Adrenal gland (tissue), 19 donors: ENCODE measurements at regions of chr12 and their contacts with region 1.

Region 1: GRCh38 chr12:40107098-40107802 is 1.4 kb upstream of the SLC2A13 start:
- DNase-seq: peak; percentile 82 to 97 (median 93)
- H3K4me3 ChIP-seq: peak overlapping the region in 3 of 4 donors; percentile 31 to 87 (median 43)
- H3K27ac ChIP-seq: peak overlapping the region in 3 of 5 donors; percentile 44 to 92 (median 92)
- H3K4me1 ChIP-seq: peaks cover 10 to 28% of the 10 kb centered on the region in 2 donors
- H3K27me3 ChIP-seq: no peaks in the 10 kb centered on the region
- CTCF ChIP-seq: peak; percentile 86 to 96 (median 91)
- POLR2A ChIP-seq: no peak

Region 2: DNA sequence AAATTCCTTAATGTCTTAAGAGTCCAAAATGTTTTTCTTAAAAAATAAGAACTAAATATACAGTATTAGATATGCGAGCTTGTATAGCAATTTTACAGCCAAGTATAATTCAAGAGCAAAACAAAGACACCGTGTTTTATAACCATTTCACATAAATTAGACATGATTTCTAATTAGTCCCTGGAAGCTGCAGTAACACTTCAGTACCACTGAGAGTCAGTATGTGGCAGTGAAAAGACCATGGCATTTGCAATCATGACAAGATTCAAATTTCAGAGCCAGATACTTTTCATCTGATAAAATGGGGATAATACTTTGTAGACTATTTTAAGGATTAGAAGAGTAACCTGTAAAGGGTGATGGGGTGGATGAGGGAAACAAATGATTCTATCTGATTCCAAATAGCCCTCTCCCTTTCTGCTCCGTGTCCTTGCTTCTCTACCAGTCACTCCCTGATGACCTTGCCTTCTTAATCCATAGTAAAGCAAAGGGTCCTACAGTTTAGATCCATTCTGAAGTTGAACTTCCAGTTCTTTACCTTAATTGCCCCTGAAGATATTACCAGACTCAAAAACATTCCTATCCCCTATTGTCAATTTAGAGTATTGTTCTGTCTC is 342.2 kb before region 1 on chr12:
- intact Hi-C with region 1: loop called (anchors 5 kb)
- DNase-seq: peak in 2 of 7 donors; percentile 17 to 26
- H3K4me3 ChIP-seq: no peak overlapping the region
- H3K27ac ChIP-seq: no peak overlapping the region
- H3K4me1 ChIP-seq: no peaks in the 10 kb centered on the region
- H3K27me3 ChIP-seq: no peaks in the 10 kb centered on the region
- CTCF ChIP-seq: peak; percentile 75 to 89 (median 86)
- POLR2A ChIP-seq: no peak

Region 3: DNA sequence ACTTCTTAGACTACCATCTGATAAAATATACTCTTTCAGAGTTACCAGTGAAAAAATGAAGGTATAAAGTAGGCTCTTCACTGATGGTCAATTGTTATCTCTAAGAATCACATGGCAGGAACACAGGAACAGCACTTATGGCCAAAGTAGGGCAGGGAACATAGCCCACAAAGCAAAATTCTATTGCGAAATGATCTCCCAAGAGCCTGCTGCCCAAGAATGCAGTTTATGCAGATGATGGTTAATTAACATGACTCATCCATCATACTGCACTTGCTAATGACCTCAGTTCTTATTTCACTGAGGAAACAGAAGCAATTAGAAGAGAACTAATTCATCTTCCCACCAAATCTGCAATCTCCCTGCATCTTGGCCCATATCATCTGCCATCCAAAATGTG is 135.1 kb before region 1 on chr12:
- intact Hi-C with region 1: no loop called
- DNase-seq: no peak
- H3K4me3 ChIP-seq: no peak overlapping the region
- H3K27ac ChIP-seq: no peak overlapping the region
- H3K4me1 ChIP-seq: no peaks in the 10 kb centered on the region
- H3K27me3 ChIP-seq: no peaks in the 10 kb centered on the region
- CTCF ChIP-seq: no peak
- POLR2A ChIP-seq: no peak

Region 4: DNA sequence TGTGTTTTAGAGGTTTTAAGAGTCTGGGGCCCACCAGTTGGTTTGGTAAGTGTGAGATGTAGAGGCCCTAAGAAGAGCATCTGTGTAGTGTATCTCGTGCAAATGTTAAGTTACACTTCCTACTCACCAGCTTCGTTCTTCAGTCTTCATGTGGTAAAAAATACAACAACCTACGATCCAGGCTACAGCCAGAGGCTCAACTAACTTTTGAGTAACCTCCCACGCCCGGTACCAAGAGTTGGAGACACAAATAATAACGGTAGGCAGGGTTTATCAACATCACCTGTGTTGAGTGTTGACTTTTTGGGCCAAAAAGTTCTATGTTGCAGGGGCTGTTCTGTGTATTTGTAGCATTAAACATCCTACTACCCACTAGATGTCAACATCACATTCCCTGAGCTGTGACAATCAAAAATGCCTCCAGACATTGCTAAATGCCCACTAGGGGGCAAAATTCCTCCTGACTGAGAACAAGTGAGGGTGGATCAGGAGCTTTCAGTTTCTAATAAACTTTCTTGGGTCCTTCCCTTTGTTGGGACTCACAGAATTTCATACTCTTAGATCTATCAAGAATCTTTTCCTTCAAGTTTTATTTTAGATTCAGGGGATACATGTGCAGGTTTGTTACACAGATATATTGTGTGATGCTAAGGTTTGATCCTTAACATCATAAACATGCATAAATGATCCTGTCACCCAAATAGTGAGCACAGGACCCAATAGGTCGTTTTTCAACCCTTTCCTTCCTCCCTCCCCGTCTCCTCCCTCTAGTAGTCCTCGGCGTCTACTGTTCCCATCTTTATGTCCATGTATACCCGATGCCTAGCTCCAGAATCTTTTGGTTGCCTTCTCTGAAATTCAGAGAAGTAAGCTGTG is 96.1 kb before region 1 on chr12:
- intact Hi-C with region 1: loop called (anchors 5 kb)
- DNase-seq: peak; percentile 44 to 83 (median 66)
- H3K4me3 ChIP-seq: peak overlapping the region in 1 of 4 donors; percentile 43
- H3K27ac ChIP-seq: peak overlapping the region in 1 of 5 donors; percentile 15
- H3K4me1 ChIP-seq: peaks cover 0 to 17% of the 10 kb centered on the region in 2 donors
- H3K27me3 ChIP-seq: no peaks in the 10 kb centered on the region
- CTCF ChIP-seq: peak in 5 of 6 experiments; percentile 72 to 86 (median 77)
- POLR2A ChIP-seq: no peak

Region 5: DNA sequence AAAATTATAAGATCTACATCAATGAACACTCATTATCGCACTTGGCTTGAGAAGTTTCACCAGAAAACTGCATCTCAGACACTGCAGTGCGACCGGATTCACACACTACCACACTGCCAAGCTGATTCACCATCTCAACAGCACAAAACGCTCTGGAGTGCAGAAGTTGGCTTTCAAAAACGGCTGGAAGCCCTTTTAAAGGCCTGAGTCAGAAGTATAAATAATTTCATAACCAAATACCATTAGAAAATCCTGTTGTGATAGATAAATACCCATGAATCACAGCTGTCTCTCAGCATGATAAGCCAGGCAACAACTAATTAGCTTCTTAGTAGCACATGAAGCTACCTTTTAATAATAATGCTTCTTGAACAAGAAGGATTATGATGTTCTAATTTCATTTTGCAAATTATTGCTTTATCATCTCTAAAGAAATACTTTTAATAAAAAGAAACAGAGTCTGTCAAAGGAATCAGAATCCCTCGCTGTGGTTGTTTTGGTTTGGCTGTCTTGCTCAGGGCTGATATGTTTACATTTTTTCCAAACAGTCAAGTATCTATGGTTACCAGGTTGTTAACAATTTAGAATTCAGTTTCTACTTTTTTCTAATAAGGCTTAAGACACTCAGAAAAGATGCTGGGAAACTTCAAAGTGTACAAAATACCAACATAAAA is 52.6 kb before region 1 on chr12:
- intact Hi-C with region 1: loop called in 1 of 2 experiments (anchors 10 kb)
- DNase-seq: peak; percentile 44 to 75 (median 70)
- H3K4me3 ChIP-seq: peak overlapping the region in 1 of 4 donors; percentile 2
- H3K27ac ChIP-seq: peak overlapping the region; percentile 29 to 37 (median 32)
- H3K4me1 ChIP-seq: peaks cover 3 to 26% of the 10 kb centered on the region in 2 donors
- H3K27me3 ChIP-seq: no peaks in the 10 kb centered on the region
- CTCF ChIP-seq: no peak
- POLR2A ChIP-seq: no peak